Spleen (tissue), 13 donors: ENCODE measurements at regions of chr19 and their contacts with region 1.

Region 1: GRCh38 chr19:11435058-11435832 is at the starts of genes ODAD3 and PRKCSH:
- DNase-seq: peak; percentile 99
- H3K4me3 ChIP-seq: peak within 1 kb of the TSS; percentile 46 to 93 (median 84)
- H3K27ac ChIP-seq: peak within 1 kb of the TSS; percentile 48 to 91 (median 86)
- H3K4me1 ChIP-seq: peaks cover 23 to 39% (median 30%) of the 10 kb centered on the region in 6 donors
- H3K27me3 ChIP-seq: no peaks in the 10 kb centered on the region
- CTCF ChIP-seq: peak; percentile 82 to 100 (median 93)
- POLR2A ChIP-seq: no peak
- total RNA-seq, gene ODAD3: 0.23 to 2.3 (median 0.85) TPM
- total RNA-seq, gene PRKCSH: 114 to 258 (median 230) TPM

Region 2: GRCh38 chr19:11324079-11324661 is 111.1 kb before region 1 on chr19:
- intact Hi-C with region 1: no loop called
- DNase-seq: peak; percentile 90
- H3K4me3 ChIP-seq: peak overlapping the region in 1 of 8 donors; percentile 52
- H3K27ac ChIP-seq: peak overlapping the region in 7 of 8 donors; percentile 81 to 96 (median 88)
- H3K4me1 ChIP-seq: peaks cover 15 to 76% (median 39%) of the 10 kb centered on the region in 6 donors
- H3K27me3 ChIP-seq: no peaks in the 10 kb centered on the region
- CTCF ChIP-seq: no peak
- POLR2A ChIP-seq: no peak

Region 3: GRCh38 chr19:11380653-11381534 is 54.4 kb before region 1 on chr19:
- intact Hi-C with region 1: loop called (anchors 5 kb)
- DNase-seq: peak; percentile 98
- H3K4me3 ChIP-seq: peak overlapping the region; percentile 49 to 81 (median 61)
- H3K27ac ChIP-seq: peak overlapping the region; percentile 83 to 97 (median 94)
- H3K4me1 ChIP-seq: peaks cover 36 to 91% (median 75%) of the 10 kb centered on the region in 6 donors
- H3K27me3 ChIP-seq: peaks cover 0 to 26% (median 0%) of the 10 kb centered on the region in 7 donors
- CTCF ChIP-seq: peak; percentile 84 to 92 (median 88)
- POLR2A ChIP-seq: peak in 2 of 3 donors; percentile 78 to 92

Region 4: GRCh38 chr19:11551603-11552235 is 116.5 kb after region 1 on chr19:
- intact Hi-C with region 1: no loop called
- DNase-seq: no peak
- H3K4me3 ChIP-seq: no peak overlapping the region
- H3K27ac ChIP-seq: peak overlapping the region in 1 of 8 donors; percentile 20
- H3K4me1 ChIP-seq: peaks cover 0 to 40% (median 13%) of the 10 kb centered on the region in 6 donors
- H3K27me3 ChIP-seq: no peaks in the 10 kb centered on the region
- CTCF ChIP-seq: peak in 2 of 11 experiments; percentile 13 to 25
- POLR2A ChIP-seq: no peak